ENCODE measurements at regions of chr3 and their contacts with region 1.

Region 1: DNA sequence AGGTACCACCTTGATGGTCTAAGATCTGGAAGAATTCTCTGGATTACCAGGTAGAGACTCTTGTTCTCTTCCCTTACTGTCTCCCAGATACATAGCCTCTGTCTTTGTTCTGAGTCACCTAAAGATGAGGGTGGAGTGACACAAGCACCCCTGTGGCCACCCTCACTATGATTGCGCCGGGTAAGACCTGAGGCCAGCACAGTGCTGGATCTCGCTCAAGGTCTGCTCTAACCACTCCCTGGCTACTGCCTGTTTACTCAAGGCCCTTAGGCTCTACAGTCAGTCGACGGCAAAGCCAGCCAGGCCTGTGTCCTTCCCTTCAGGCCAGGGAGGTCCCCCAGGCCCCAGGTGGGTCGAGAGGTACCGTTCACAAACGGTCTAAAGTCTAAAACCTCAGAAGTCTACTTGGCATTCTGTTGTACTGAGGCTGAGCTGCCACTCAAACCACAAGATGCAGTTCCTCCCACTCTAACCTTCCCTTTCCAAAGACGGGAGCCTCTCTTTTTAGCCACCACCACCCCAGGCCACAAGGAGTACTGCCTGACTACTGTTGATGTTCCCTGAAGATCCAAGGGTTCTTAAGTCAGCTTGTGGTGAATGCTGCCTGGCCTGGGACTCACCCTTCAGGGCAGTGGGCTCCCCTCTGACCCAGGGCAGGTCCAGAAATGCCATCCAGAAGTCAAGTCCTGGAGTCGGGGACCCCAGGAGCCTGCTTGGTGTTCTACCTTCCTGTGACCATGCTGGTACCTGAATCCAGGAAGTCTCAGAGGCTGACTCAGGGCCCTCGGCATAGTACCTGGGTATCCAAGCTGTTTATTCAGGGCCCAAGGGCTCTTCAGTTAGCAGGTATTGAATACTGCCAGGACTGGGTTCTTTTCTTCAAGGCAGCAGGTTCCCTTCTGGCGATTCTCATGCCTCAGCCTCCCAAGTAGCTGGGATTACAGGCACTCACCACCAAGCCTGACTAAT is 88.6 kb downstream of the ARHGEF26 start:
- DNase-seq: no peak
- ATAC-seq: no peak
- H3K4me3 ChIP-seq: no peak overlapping the region
- H3K27ac ChIP-seq: no peak overlapping the region
- H3K4me1 ChIP-seq: no peaks in the 10 kb centered on the region
- H3K27me3 ChIP-seq: no peaks in the 10 kb centered on the region
- CTCF ChIP-seq: no peak
- POLR2A ChIP-seq: no peak
- RAD21 ChIP-seq: no peak

Region 2: DNA sequence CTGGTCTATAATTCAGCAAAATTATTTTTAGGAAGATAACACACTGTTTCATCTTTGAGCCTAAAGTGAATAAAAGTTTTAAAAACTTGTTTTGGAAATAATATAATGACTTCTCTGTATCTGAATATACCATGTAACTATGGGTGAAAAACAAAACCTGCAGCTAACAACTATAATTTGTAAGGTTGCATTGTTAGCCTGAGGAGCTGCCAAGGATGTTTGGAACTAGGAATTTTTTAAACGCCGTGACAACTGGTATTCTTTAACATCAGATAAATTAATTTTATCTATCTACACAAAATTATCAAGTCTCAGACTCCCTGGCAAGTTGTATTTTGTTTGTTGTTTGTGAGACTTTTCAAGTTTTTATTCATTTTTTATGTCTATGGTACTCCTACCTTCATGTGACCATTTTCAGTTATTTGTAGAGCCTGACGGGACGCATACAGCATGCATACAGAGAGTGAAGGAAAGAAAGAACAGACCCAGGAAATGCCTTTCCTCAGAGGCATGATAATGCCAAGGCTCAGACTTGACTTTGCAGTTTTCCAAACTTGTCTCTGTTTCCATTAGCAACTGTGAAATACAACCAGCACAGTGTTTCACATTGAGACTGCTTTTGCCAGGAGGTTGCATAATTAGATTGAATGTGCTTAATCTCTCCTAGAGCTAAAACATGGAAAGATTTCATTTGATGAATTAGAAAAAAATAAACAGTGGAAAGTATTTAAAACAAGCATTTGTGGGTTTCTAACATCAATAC is 149.4 kb before region 1 on chr3:
- CTCF ChIA-PET with region 1: no interaction called
- POLR2A ChIA-PET with region 1: no interaction called
- dilution Hi-C with region 1: no loop called
- in situ Hi-C with region 1: no loop called
- intact Hi-C with region 1: no loop called
- DNase-seq: peak; percentile 25
- ATAC-seq: peak; percentile 44; the same call in 1 of the 2 replicates
- H3K4me3 ChIP-seq: no peak overlapping the region
- H3K27ac ChIP-seq: no peak overlapping the region
- H3K4me1 ChIP-seq: no peaks in the 10 kb centered on the region
- H3K27me3 ChIP-seq: no peaks in the 10 kb centered on the region
- CTCF ChIP-seq: no peak
- POLR2A ChIP-seq: no peak
- RAD21 ChIP-seq: no peak

Region 3: GRCh38 chr3:154220462-154220861 is 10.7 kb after region 1 on chr3:
- CTCF ChIA-PET with region 1: interaction called, 3 read pairs
- POLR2A ChIA-PET with region 1: no interaction called
- dilution Hi-C with region 1: no loop called
- in situ Hi-C with region 1: no loop called
- intact Hi-C with region 1: loop called (anchors 2 kb)
- DNase-seq: no peak
- ATAC-seq: no peak
- H3K4me3 ChIP-seq: no peak overlapping the region
- H3K27ac ChIP-seq: no peak overlapping the region
- H3K4me1 ChIP-seq: no peaks in the 10 kb centered on the region
- H3K27me3 ChIP-seq: no peaks in the 10 kb centered on the region
- CTCF ChIP-seq: no peak
- POLR2A ChIP-seq: no peak
- RAD21 ChIP-seq: no peak